PC-3 (cell line): ENCODE measurements at regions of chr2 and their contacts with region 1.

Region 1: DNA sequence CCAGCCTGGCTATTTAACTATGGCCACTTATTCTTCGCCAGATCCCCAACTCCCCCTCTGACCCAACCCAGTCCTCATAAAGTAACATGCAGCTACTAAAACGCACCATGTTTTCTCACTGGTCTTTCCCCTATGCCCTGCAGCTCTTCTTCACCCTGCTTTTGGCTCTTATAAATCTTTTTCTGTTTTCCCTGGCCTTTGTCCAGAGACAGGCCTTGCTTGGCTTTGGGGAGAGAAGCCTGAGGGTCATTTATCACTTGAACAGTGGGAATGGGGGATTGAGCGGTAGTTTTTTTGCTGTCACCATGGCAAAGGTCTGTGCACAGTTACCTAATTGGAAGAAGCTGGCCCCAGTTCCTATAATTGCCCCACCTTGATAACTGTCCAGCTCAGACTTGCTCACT is 202.9 kb upstream of the NT5C1B start:
- DNase-seq: no peak
- ATAC-seq: no peak
- H3K4me3 ChIP-seq: no peak overlapping the region
- H3K27ac ChIP-seq: no peak overlapping the region
- H3K4me1 ChIP-seq: no peaks in the 10 kb centered on the region
- H3K27me3 ChIP-seq: no peaks in the 10 kb centered on the region
- CTCF ChIP-seq: no peak

Region 2: DNA sequence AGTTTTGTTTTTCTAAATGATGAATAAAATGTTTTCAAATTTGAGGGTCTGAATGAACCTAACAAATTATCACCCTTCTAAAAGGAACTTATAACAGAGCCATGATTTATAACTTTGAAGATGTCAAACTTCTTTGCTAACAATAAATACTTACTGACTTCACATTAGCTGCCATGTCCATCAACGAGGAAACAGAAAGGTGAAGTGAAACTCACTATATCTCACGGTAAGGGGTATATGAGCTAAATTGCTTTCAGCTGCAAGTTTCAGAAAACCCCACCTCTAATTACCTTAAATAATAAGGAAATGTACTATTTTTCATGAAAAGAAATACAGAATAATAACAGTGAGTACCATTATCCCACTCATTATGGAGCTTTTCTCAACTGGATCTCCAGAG is 148.0 kb after region 1 on chr2:
- CTCF ChIA-PET with region 1: no interaction called
- POLR2A ChIA-PET with region 1: interaction called, 11 read pairs
- intact Hi-C with region 1: no loop called
- DNase-seq: no peak
- ATAC-seq: no peak
- H3K4me3 ChIP-seq: no peak overlapping the region
- H3K27ac ChIP-seq: no peak overlapping the region
- H3K4me1 ChIP-seq: peaks cover 5% of the 10 kb centered on the region; the same call in 1 of the 2 replicates
- H3K27me3 ChIP-seq: no peaks in the 10 kb centered on the region
- CTCF ChIP-seq: no peak